ENCODE measurements at regions of chr5 and their contacts with region 1.

Region 1: GRCh38 chr5:140244525-140245025 is 58.3 kb downstream of the PFDN1 start:
- DNase-seq: peak; percentile 93
- H3K4me3 Mint-ChIP-seq: peak overlapping the region; percentile 32
- H3K27ac Mint-ChIP-seq: peak overlapping the region; percentile 9
- H3K4me1 Mint-ChIP-seq: peaks cover 52% of the 10 kb centered on the region
- H3K27me3 Mint-ChIP-seq: peaks cover 4% of the 10 kb centered on the region

Region 2: GRCh38 chr5:140186267-140186671 is 58.3 kb before region 1 on chr5:
- CTCF ChIA-PET with region 1: no interaction called
- DNase-seq: no peak
- H3K4me3 Mint-ChIP-seq: no peak overlapping the region
- H3K27ac Mint-ChIP-seq: no peak overlapping the region
- H3K4me1 Mint-ChIP-seq: no peaks in the 10 kb centered on the region
- H3K27me3 Mint-ChIP-seq: peaks cover 5% of the 10 kb centered on the region

Region 3: GRCh38 chr5:140261403-140262171 is 17.0 kb after region 1 on chr5:
- CTCF ChIA-PET with region 1: interaction called, 12 read pairs
- DNase-seq: peak; percentile 55
- H3K4me3 Mint-ChIP-seq: no peak overlapping the region
- H3K27ac Mint-ChIP-seq: peak overlapping the region; percentile 84
- H3K4me1 Mint-ChIP-seq: peaks cover 86% of the 10 kb centered on the region
- H3K27me3 Mint-ChIP-seq: no peaks in the 10 kb centered on the region

Region 4: GRCh38 chr5:140302786-140303639 is 58.4 kb after region 1 on chr5 and contains the start of gene PFDN1:
- CTCF ChIA-PET with region 1: interaction called, 10 read pairs
- DNase-seq: peak; percentile 95
- H3K4me3 Mint-ChIP-seq: peak within 1 kb of the TSS; percentile 98
- H3K27ac Mint-ChIP-seq: peak within 1 kb of the TSS; percentile 91
- H3K4me1 Mint-ChIP-seq: peaks cover 36% of the 10 kb centered on the region
- H3K27me3 Mint-ChIP-seq: peaks cover 18% of the 10 kb centered on the region

Region 5: DNA sequence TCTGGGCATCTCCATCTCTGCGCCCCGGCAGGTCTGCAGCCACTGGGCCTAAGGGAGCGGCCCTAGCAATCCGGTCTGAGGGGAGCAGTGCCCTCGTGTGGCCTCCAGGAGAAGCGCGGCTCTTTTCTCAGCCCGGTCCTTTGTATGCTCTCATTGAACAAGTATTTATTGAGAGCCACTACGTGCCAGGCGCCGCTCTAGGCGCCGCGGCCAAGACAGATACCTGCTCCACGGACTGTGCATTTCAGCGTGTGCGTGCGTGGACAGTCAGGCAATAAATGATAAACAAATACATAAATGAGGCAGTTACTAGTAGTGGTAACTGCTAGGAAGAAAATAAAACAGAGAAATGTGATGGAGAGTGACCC is 113.1 kb after region 1 on chr5:
- CTCF ChIA-PET with region 1: interaction called, 856 read pairs
- DNase-seq: peak; percentile 86
- H3K4me3 Mint-ChIP-seq: peak overlapping the region; percentile 51
- H3K27ac Mint-ChIP-seq: no peak overlapping the region
- H3K4me1 Mint-ChIP-seq: peaks cover 12% of the 10 kb centered on the region
- H3K27me3 Mint-ChIP-seq: peaks cover 19% of the 10 kb centered on the region

Region 6: GRCh38 chr5:140372971-140373487 is 128.5 kb after region 1 on chr5:
- CTCF ChIA-PET with region 1: interaction called, 15 read pairs
- DNase-seq: peak; percentile 61
- H3K4me3 Mint-ChIP-seq: no peak overlapping the region
- H3K27ac Mint-ChIP-seq: no peak overlapping the region
- H3K4me1 Mint-ChIP-seq: peaks cover 3% of the 10 kb centered on the region
- H3K27me3 Mint-ChIP-seq: no peaks in the 10 kb centered on the region